ENCODE measurements at regions of chr2 and their contacts with region 1.

Region 1: GRCh38 chr2:42086500-42086953 is 38.7 kb downstream of the PKDCC start:
- DNase-seq: peak; percentile 70
- ATAC-seq: peak; percentile 59
- H3K4me3 ChIP-seq: no peak overlapping the region
- H3K27ac ChIP-seq: no peak overlapping the region
- H3K4me1 ChIP-seq: peaks cover 14% of the 10 kb centered on the region
- H3K27me3 ChIP-seq: no peaks in the 10 kb centered on the region
- CTCF ChIP-seq: peak; percentile 88
- POLR2A ChIP-seq: no peak
- RAD21 ChIP-seq: peak; percentile 95

Region 2: GRCh38 chr2:41814963-41815362 is 271.6 kb before region 1 on chr2:
- CTCF ChIA-PET with region 1: no interaction called
- POLR2A ChIA-PET with region 1: no interaction called
- dilution Hi-C with region 1: no loop called
- in situ Hi-C with region 1: no loop called
- intact Hi-C with region 1: no loop called
- DNase-seq: no peak
- ATAC-seq: no peak
- H3K4me3 ChIP-seq: no peak overlapping the region
- H3K27ac ChIP-seq: no peak overlapping the region
- H3K4me1 ChIP-seq: no peaks in the 10 kb centered on the region
- H3K27me3 ChIP-seq: peaks cover 2% of the 10 kb centered on the region
- CTCF ChIP-seq: no peak
- POLR2A ChIP-seq: no peak
- RAD21 ChIP-seq: no peak

Region 3: DNA sequence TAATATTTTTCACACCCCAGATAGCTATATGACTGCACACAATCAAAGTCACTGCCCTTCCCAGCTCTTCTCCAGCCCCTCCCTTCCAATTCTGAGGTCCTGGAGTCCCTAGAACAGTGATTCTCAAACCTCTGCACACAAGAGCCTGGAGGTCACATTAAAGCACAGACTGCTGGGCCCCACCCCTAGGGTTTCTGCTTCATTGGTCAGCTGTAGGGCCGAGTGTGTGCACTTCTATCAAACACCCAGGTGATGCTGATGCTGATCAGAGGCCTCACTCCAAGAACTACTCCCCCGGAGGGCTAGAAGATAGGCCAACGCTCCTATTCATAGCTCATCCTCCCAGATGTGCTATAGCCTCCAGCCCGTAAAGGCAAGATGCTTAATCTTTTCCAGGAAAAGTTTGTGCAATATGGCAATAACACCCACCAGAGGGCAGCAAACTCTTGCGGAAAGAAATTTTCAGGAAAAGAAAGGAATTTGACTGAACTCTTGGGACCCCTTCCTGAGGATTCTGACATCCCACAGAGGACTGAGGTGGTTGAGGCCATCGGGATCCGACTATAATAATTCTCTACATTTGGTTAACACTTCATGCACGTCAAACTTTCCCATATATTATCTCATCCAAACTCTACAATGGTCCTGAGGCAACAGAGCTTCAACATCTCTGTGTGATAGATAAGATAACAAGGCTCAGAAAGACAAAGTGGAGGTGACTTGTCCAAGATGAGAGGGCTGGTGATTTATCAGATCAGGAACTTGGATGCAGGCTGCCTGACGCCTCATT is 232.9 kb before region 1 on chr2:
- CTCF ChIA-PET with region 1: interaction called, 34 read pairs
- POLR2A ChIA-PET with region 1: interaction called, 3 read pairs
- dilution Hi-C with region 1: no loop called
- in situ Hi-C with region 1: no loop called
- intact Hi-C with region 1: loop called (anchors 1 kb)
- DNase-seq: peak; percentile 65
- ATAC-seq: peak; percentile 73
- H3K4me3 ChIP-seq: no peak overlapping the region
- H3K27ac ChIP-seq: no peak overlapping the region
- H3K4me1 ChIP-seq: peaks cover 2% of the 10 kb centered on the region; the same call in 1 of the 2 replicates
- H3K27me3 ChIP-seq: peaks cover 16% of the 10 kb centered on the region
- CTCF ChIP-seq: peak; percentile 79
- POLR2A ChIP-seq: no peak
- RAD21 ChIP-seq: peak; percentile 84

Region 4: DNA sequence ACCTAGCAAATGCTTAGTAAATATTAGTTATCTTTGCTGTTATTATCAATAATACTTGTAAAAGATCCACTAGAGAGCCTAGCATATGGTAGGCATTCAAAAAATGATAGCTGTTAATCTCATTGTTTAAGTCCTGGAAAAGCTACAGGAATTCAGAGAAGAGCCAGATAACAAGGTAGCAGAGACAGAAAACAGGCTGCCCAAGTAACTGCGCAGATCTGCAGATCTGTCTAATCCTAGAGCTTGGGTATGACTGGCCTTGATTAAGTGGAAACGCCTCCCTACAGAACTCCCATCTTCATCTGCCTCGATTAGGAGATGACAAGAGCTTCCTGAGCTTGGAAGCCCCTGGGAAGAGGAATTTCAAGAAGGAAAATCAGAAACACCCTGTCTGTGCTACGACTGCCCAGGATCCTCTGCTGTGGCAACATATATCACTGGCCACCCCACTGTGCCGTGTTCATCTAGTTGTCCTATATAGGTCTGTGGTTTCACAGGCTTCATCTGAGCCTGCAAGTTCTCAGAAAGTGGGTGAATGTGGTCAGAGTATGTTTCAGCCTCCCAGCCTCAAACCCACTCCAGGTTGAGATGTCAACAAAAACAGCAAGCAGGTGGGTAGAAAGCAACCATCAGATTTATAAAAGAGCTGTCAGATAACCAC is 190.2 kb before region 1 on chr2:
- CTCF ChIA-PET with region 1: interaction called, 3 read pairs
- POLR2A ChIA-PET with region 1: no interaction called
- dilution Hi-C with region 1: loop called (anchors 25 kb)
- in situ Hi-C with region 1: no loop called
- intact Hi-C with region 1: no loop called
- DNase-seq: no peak
- ATAC-seq: no peak
- H3K4me3 ChIP-seq: no peak overlapping the region
- H3K27ac ChIP-seq: no peak overlapping the region
- H3K4me1 ChIP-seq: no peaks in the 10 kb centered on the region; the same call in 1 of the 2 replicates
- H3K27me3 ChIP-seq: 0 out of 2 replicates have a peak, but pooled peaks cover 4% of the 10 kb centered on the region
- CTCF ChIP-seq: no peak
- POLR2A ChIP-seq: no peak
- RAD21 ChIP-seq: no peak

Region 5: DNA sequence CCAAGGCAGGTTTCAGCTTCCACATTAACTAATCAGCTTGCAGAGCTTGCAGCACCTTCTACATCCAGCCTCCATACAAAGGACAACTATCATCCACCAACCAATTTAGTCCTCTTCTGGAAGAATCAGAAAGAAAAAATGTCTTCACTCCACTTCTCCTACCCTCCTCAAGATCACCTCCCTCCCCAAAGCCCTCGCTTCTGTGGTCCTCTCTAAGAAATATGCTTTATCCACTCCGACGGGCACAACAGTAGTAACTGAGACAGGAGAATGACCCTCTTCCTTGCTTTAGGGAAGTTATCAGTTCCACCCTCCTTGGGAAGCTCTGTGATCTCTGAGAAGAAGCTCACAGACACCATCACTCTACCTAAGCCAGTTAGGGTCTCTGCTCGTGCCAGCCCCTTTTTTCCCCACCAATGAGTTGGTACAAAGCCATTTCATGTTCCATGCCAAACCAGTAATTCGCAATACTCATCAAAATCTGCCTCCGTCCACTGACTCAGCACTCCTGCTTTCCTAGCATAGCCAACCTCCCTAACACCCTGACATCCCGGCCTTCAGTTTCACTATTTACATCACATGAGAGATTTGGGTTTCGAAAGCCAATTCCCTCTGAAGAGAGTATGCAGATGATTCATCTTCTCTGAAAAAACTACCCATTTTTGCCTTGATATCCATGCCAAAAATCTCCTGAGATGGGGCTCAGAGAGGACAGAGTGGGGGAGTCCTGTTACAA is 152.8 kb before region 1 on chr2:
- CTCF ChIA-PET with region 1: interaction called, 4 read pairs
- POLR2A ChIA-PET with region 1: no interaction called
- dilution Hi-C with region 1: no loop called
- in situ Hi-C with region 1: no loop called
- intact Hi-C with region 1: loop called (anchors 5 kb)
- DNase-seq: peak; percentile 96
- ATAC-seq: peak; percentile 70
- H3K4me3 ChIP-seq: no peak overlapping the region
- H3K27ac ChIP-seq: peak overlapping the region; percentile 79; the same call in 1 of the 2 replicates
- H3K4me1 ChIP-seq: peaks cover 39% of the 10 kb centered on the region
- H3K27me3 ChIP-seq: no peaks in the 10 kb centered on the region
- CTCF ChIP-seq: no peak
- POLR2A ChIP-seq: no peak
- RAD21 ChIP-seq: peak; percentile 7; the same call in 1 of the 2 replicates

Region 6: DNA sequence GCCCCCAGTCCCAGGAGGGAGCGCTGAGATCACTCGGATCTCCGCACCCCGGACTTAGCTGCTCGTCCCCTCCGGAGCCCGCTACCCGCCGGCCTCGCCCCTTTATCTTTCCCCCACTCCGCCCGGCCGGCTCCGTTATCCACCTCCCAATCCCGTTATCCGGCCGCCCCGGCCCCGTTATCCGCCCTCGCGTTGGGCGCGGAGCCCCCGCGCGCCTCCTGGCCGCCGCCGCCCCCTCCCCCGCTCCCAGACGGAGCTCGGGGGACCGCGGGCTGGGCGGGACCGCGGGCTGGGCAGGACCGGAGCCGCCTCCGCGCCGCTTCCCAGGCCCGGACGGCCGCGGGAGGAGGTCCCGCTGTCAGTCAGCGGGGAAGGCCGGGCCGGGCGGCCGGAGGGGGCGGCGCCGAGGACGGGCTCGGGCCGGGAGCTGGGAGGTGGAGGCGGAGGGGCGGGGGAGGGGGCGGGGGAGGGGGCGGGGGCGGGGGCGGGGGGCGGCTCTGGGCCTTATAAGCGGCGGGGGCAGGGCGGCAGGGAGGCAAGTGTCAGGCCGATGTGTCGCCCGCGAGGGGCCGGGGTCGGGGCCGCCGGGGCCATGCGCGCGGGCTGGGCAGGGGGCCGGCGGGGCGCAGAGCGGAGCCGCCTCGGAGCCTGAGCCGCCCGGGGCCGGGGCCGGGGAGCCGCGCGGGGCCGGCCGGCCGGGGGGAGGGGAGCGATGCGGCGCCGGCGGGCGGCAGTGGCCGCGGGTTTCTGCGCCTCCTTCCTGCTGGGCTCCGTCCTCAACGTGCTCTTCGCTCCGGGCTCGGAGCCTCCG is 38.8 kb before region 1 on chr2 and contains the start of gene PKDCC:
- CTCF ChIA-PET with region 1: interaction called, 4 read pairs
- POLR2A ChIA-PET with region 1: no interaction called
- dilution Hi-C with region 1: no loop called
- in situ Hi-C with region 1: no loop called
- intact Hi-C with region 1: loop called (anchors 1 kb)
- DNase-seq: peak; percentile 79
- ATAC-seq: peak; percentile 88
- H3K4me3 ChIP-seq: peak within 1 kb of the TSS; percentile 94
- H3K27ac ChIP-seq: peak within 1 kb of the TSS; percentile 84
- H3K4me1 ChIP-seq: peaks cover 24% of the 10 kb centered on the region
- H3K27me3 ChIP-seq: no peaks in the 10 kb centered on the region; the same call in 1 of the 2 replicates
- CTCF ChIP-seq: no peak
- POLR2A ChIP-seq: no peak
- RAD21 ChIP-seq: no peak; the same call in 1 of the 2 replicates
- total RNA-seq, gene PKDCC: 50.3 and 55.6 TPM in 2 replicates

Region 7: GRCh38 chr2:42063431-42064171 is 22.9 kb before region 1 on chr2:
- CTCF ChIA-PET with region 1: no interaction called
- POLR2A ChIA-PET with region 1: no interaction called
- dilution Hi-C with region 1: no loop called
- in situ Hi-C with region 1: no loop called
- intact Hi-C with region 1: loop called (anchors 2 kb)
- DNase-seq: peak; percentile 91
- ATAC-seq: peak; percentile 54
- H3K4me3 ChIP-seq: no peak overlapping the region
- H3K27ac ChIP-seq: peak overlapping the region; percentile 95
- H3K4me1 ChIP-seq: peaks cover 29% of the 10 kb centered on the region
- H3K27me3 ChIP-seq: no peaks in the 10 kb centered on the region
- CTCF ChIP-seq: no peak
- POLR2A ChIP-seq: no peak
- RAD21 ChIP-seq: no peak